Astrocyte of the cerebellum (primary cell): ENCODE measurements at regions of chr4 and their contacts with region 1.

Region 1: DNA sequence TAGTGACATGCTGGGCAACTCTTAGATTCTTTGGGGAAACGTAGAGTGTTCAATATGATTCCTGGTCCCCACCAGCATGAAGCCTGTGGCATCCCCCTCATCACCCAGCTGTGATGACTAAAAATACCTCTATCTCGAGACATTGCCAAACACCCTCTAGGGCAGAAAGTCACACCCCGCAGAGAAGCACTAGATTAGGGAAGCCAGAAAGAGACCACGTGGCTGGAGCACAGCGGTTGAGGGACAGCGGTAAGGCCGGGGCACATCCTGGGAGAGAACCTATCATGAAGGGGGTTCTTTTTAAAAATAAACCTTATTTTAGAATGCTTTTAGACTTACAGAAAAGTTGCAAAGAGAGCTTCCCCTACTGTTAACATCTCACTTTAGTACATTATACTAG is 11.0 kb downstream of the FAT1 start:
- DNase-seq: no peak
- H3K4me3 ChIP-seq: no peak overlapping the region
- CTCF ChIP-seq: no peak

Region 2: GRCh38 chr4:186621959-186622553 is 90.6 kb before region 1 on chr4:
- in situ Hi-C with region 1: loop called (anchors 5 kb)
- DNase-seq: peak; percentile 84
- H3K4me3 ChIP-seq: no peak overlapping the region
- CTCF ChIP-seq: peak; percentile 84